ENCODE measurements at regions of chr1 and their contacts with region 1.

Region 1: GRCh38 chr1:101262630-101263348 is 26.0 kb downstream of the S1PR1 start:
- DNase-seq: peak in 3 of 9 experiments; percentile 22 to 67 (median 48)
- ATAC-seq: peak; percentile 49
- H3K4me3 ChIP-seq: peak overlapping the region in 1 of 2 experiments; percentile 7
- H3K4me3 Mint-ChIP-seq: peak overlapping the region; percentile 46
- H3K27ac ChIP-seq: peak overlapping the region in 1 of 2 experiments; percentile 52
- H3K27ac Mint-ChIP-seq: peak overlapping the region; percentile 65
- H3K4me1 ChIP-seq: peaks cover 89% of the 10 kb centered on the region
- H3K4me1 Mint-ChIP-seq: peaks cover 86% of the 10 kb centered on the region
- H3K27me3 ChIP-seq: no peaks in the 10 kb centered on the region
- H3K27me3 Mint-ChIP-seq: no peaks in the 10 kb centered on the region
- CTCF ChIP-seq: no peak

Region 2: GRCh38 chr1:101071470-101071891 is 191.3 kb before region 1 on chr1:
- CTCF ChIA-PET with region 1: no interaction called
- POLR2A ChIA-PET with region 1: no interaction called
- intact Hi-C with region 1: no loop called
- DNase-seq: no peak
- ATAC-seq: no peak
- H3K4me3 ChIP-seq: no peak overlapping the region
- H3K4me3 Mint-ChIP-seq: no peak overlapping the region
- H3K27ac ChIP-seq: no peak overlapping the region
- H3K27ac Mint-ChIP-seq: no peak overlapping the region
- H3K4me1 ChIP-seq: peaks cover 22% of the 10 kb centered on the region
- H3K4me1 Mint-ChIP-seq: peaks cover 48% of the 10 kb centered on the region
- H3K27me3 ChIP-seq: no peaks in the 10 kb centered on the region
- H3K27me3 Mint-ChIP-seq: no peaks in the 10 kb centered on the region
- CTCF ChIP-seq: no peak

Region 3: DNA sequence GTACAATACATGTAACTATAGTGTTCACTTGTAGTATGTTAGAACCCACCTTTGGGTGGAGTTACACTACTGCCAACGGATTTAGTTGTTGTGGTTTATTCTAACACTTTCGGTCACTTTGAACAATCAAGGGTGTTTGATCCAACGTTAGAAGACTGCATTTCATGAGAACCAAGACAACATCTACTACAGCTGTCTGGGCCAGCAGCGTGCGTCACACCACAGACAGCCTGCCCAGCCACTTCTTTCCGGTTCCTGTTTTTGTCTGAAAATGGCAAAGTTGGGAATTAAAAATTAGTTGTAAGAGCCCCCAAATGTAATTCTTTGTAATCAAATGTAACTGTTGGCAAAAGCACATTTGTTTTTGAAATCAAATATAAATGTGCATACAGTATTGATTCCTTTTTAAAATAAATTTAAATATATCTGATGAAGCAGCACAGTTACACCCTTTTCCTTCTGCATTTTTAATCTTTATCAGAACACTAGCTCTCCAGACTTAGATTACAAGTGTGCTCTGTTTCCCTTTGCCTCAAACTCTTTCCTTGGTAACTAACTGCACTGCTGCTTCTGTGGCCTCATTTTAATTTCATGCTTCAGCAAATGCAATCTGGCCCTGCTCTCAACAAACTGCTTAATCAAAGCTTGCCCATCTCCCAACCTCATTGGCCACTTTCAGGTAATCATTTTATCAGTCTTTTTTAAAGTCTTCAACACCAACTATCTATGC is 150.6 kb before region 1 on chr1:
- CTCF ChIA-PET with region 1: no interaction called
- POLR2A ChIA-PET with region 1: no interaction called
- intact Hi-C with region 1: no loop called
- DNase-seq: peak; percentile 53 to 96 (median 73)
- ATAC-seq: peak; percentile 89
- H3K4me3 ChIP-seq: peak overlapping the region in 1 of 2 experiments; percentile 23
- H3K4me3 Mint-ChIP-seq: peak overlapping the region; percentile 66
- H3K27ac ChIP-seq: peak overlapping the region; percentile 84 to 93
- H3K27ac Mint-ChIP-seq: peak overlapping the region; percentile 99
- H3K4me1 ChIP-seq: peaks cover 42% of the 10 kb centered on the region
- H3K4me1 Mint-ChIP-seq: peaks cover 64% of the 10 kb centered on the region
- H3K27me3 ChIP-seq: no peaks in the 10 kb centered on the region
- H3K27me3 Mint-ChIP-seq: no peaks in the 10 kb centered on the region
- CTCF ChIP-seq: no peak

Region 4: DNA sequence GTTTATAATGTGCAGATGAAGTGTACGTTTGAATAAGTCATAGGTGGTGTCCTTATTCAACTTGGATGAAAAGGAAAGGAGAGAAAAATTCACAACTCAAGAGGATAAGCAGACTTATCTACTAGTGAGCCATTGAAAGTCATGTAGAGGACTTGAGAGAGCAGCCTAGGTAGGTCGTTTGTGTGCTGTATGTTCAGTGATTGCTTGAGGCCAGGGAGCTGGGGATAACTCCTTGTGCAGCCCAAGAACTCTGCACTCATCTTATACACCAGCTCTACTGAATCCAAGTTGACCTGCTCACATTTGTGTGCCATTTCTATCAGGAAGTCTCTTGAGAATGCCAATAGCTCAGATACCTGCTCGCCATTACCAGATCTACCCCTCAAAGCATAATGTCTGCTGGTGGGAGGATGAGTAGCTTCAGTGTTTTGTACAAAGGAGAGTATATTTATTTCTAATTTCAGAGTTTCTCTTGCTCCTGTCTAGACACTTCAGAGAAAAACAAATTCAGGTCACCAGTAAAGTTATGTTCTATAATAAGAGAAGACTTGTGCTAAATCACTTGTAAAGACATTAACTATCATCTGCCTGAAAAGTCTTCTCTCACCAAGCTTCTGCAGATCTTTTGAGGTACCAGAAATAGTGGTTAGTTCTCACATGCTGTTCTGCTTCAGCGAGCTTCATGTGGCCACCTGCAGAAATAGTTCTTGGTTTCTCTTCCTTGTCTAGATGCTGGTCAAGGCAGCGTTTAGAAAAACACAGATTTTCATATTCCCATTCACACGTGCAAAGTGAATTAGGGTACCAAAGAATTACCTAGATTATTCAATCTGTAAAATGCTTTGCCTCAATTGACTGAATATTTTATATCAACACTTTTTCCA is 15.1 kb before region 1 on chr1:
- CTCF ChIA-PET with region 1: interaction called, 4 read pairs
- POLR2A ChIA-PET with region 1: interaction called, 25 read pairs
- intact Hi-C with region 1: loop called in 1 of 2 experiments (anchors 2 kb)
- DNase-seq: peak in 2 of 9 experiments; percentile 23 to 48
- ATAC-seq: peak; percentile 32
- H3K4me3 ChIP-seq: no peak overlapping the region
- H3K4me3 Mint-ChIP-seq: no peak overlapping the region
- H3K27ac ChIP-seq: peak overlapping the region in 1 of 2 experiments; percentile 34
- H3K27ac Mint-ChIP-seq: peak overlapping the region; percentile 83
- H3K4me1 ChIP-seq: peaks cover 65% of the 10 kb centered on the region
- H3K4me1 Mint-ChIP-seq: peaks cover 72% of the 10 kb centered on the region
- H3K27me3 ChIP-seq: no peaks in the 10 kb centered on the region
- H3K27me3 Mint-ChIP-seq: no peaks in the 10 kb centered on the region
- CTCF ChIP-seq: no peak

Measured in CD8-positive, alpha-beta T cell (primary cell).